SK-N-SH (cell line): ENCODE measurements at regions of chr13 and their contacts with region 1.

Region 1: DNA sequence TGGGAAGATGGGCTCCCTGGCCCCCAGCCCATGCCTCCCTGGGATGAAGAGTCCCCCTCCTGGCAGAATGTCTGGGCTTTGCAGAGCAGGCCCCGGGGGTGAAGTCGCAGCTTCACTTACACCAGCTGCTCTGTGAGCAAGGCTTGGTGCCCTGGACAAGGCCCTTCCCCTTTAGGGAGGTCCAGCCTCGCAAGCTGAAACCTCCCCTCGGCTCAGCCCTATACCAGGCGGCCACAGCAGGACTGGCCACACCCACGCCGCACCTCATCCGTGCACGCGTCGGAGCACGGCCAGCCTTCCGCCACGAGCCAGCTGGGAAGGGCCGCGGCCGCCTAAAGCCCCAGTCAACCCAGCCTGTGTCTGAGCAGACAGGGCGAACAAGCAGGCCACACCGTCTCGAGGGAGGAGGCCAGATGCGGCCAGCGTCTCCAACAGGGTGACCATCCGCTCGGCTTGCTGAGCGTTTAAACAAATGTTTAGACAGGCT is 83.2 kb upstream of the MCF2L start:
- DNase-seq: peak; percentile 96
- H3K4me3 ChIP-seq: peak overlapping the region; percentile 25 to 33; a peak in 3 of 4 replicates
- H3K27ac ChIP-seq: peak overlapping the region in 1 of 2 experiments; percentile 86; a peak in 2 of 4 replicates
- H3K4me1 ChIP-seq: peaks cover 0 to 11% of the 10 kb centered on the region in 2 experiments; a peak in 2 of 4 replicates
- H3K27me3 ChIP-seq: no peaks in the 10 kb centered on the region
- CTCF ChIP-seq: no peak
- EP300 ChIP-seq: no peak; a peak in 2 of 4 replicates
- RAD21 ChIP-seq: no peak

Region 2: GRCh38 chr13:112931028-112931934 is 45.5 kb after region 1 on chr13:
- CTCF ChIA-PET with region 1: interaction called, 12 read pairs
- POLR2A ChIA-PET with region 1: no interaction called
- DNase-seq: peak; percentile 71
- H3K4me3 ChIP-seq: no peak overlapping the region
- H3K27ac ChIP-seq: peak overlapping the region in 1 of 2 experiments; percentile 43; a peak in 1 of 4 replicates
- H3K4me1 ChIP-seq: peaks cover 0 to 50% of the 10 kb centered on the region in 2 experiments; a peak in 2 of 4 replicates
- H3K27me3 ChIP-seq: peaks cover 13% of the 10 kb centered on the region; the same call in 1 of the 2 replicates
- CTCF ChIP-seq: peak; percentile 69
- EP300 ChIP-seq: no peak
- RAD21 ChIP-seq: peak; percentile 58

Region 3: GRCh38 chr13:113064534-113065405 is 178.9 kb after region 1 on chr13:
- CTCF ChIA-PET with region 1: no interaction called
- POLR2A ChIA-PET with region 1: no interaction called
- DNase-seq: no peak
- H3K4me3 ChIP-seq: no peak overlapping the region
- H3K27ac ChIP-seq: no peak overlapping the region
- H3K4me1 ChIP-seq: no peaks in the 10 kb centered on the region
- H3K27me3 ChIP-seq: no peaks in the 10 kb centered on the region
- CTCF ChIP-seq: no peak
- EP300 ChIP-seq: no peak
- RAD21 ChIP-seq: no peak